Activated CD4-positive, alpha-beta memory T cell treated with anti-CD3 and anti-CD28 coated beads for 36 hours (primary cell): ENCODE measurements at regions of chr14 and their contacts with region 1.

Region 1: GRCh38 chr14:90758028-90758889 is 58.0 kb downstream of the TTC7B start:
- DNase-seq: peak; percentile 97
- H3K4me3 Mint-ChIP-seq: peak overlapping the region; percentile 73
- H3K27ac Mint-ChIP-seq: peak overlapping the region; percentile 75
- H3K4me1 Mint-ChIP-seq: peaks cover 22% of the 10 kb centered on the region
- H3K27me3 Mint-ChIP-seq: no peaks in the 10 kb centered on the region

Region 2: DNA sequence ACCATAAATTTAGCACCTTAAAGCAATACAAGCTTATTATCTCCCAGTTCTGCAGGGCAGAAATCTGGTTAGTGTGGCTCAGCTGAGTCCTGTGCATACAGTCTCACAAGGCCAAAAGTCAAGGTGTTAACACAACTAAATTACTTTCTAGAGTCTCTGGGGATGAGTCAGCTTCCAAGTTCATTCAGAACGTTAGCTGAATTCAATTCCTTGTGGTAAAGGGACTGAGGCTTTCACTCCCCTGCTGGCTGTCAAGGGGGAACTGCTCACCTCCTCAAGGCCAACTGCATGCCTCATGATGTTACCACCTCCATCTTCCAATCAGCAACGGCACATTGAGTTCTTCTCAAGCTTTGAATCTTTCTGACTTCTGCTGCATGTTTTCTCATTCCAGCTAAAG is 1993.1 kb before region 1 on chr14:
- CTCF ChIA-PET with region 1: no interaction called
- POLR2A ChIA-PET with region 1: no interaction called
- intact Hi-C with region 1: no loop called
- DNase-seq: no peak
- H3K4me3 Mint-ChIP-seq: no peak overlapping the region
- H3K27ac Mint-ChIP-seq: no peak overlapping the region
- H3K4me1 Mint-ChIP-seq: no peaks in the 10 kb centered on the region
- H3K27me3 Mint-ChIP-seq: no peaks in the 10 kb centered on the region

Region 3: GRCh38 chr14:90256354-90257131 is 501.7 kb before region 1 on chr14 and contains the start of gene PSMC1:
- CTCF ChIA-PET with region 1: no interaction called
- POLR2A ChIA-PET with region 1: no interaction called
- intact Hi-C with region 1: loop called (anchors 5 kb)
- DNase-seq: peak; percentile 95
- H3K4me3 Mint-ChIP-seq: peak within 1 kb of the TSS; percentile 98
- H3K27ac Mint-ChIP-seq: peak within 1 kb of the TSS; percentile 94
- H3K4me1 Mint-ChIP-seq: peaks cover 26% of the 10 kb centered on the region
- H3K27me3 Mint-ChIP-seq: peaks cover 5% of the 10 kb centered on the region
- total RNA-seq, gene PSMC1: 107 to 108 TPM

Region 4: DNA sequence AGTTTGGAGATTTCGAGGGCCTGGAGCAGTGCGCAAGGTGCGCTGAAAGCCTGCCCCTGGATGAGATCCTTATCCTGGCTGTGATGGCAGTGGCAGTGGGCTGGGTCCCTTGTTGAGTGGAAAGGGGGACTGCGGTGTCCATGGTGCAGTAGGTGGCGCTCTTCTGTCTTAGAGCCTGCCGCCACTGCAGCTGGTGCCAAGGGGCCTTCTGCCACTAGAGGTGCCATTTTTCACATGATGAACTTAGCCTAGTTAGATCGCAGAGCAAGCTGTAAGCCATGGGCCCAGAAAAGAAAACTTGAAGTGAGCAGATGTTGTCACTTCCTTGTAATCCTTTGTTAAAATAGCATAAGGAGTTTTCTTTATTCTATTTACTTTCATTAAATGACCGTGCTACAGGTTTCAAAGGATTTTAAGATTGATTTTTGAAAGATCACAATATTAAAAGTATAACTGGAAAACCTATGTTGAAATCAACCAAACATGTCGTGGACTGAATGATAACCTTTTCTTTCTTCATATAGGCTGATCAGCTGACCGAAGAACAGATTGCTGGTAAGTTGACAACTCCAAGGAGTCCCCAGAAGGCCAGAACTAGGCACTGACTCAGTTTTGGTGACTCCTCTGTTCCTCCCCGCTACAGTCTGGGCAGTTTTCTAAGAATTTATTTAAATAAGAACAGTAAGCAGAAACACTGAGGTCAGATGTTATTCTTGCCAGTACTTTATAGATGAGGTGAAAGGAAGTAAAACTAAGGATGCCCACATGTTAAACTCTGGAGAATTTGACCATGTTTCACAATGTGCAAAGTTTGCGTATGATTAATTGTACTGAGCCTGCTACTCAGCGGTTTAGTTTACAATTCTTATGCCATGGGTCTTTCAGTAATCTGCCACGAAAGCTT is 358.5 kb before region 1 on chr14:
- CTCF ChIA-PET with region 1: interaction called, 14 read pairs
- POLR2A ChIA-PET with region 1: no interaction called
- intact Hi-C with region 1: loop called (anchors 1 kb)
- DNase-seq: peak; percentile 92
- H3K4me3 Mint-ChIP-seq: peak overlapping the region; percentile 97
- H3K27ac Mint-ChIP-seq: peak overlapping the region; percentile 99
- H3K4me1 Mint-ChIP-seq: peaks cover 52% of the 10 kb centered on the region
- H3K27me3 Mint-ChIP-seq: no peaks in the 10 kb centered on the region

Region 5: DNA sequence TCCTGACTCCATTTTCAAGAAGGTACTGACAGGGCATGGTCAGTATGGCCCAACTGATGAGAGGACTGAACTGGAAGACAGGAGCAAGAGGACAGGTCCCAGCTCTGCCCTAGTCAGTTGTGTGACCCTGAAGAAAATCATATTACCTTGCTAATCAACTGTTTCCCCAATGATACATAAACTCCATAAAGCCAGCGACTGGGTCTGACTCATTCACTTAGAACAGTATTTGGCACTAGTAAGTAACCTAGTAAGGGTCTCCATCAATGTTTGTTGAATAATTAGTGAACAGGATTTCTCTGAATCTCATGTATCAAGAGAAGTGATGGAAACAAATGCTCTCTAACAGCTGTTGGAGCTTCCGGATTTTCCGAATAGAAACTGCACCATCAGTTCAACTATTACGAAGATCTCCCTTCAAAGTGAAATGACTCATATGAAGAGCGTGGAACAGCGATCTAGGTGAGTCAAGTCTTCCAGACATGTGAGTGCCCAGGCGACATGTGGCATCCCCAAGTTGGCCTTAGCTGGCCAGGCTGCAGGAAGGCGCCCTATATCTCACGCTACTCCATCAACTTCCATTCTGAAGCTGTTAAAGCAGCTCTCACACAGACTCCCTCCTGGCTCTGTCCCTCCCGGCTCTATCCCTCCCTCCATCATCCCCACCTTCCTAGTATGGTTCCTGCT is 36.5 kb before region 1 on chr14:
- CTCF ChIA-PET with region 1: interaction called, 13 read pairs
- POLR2A ChIA-PET with region 1: no interaction called
- intact Hi-C with region 1: loop called (anchors 5 kb)
- DNase-seq: peak; percentile 51
- H3K4me3 Mint-ChIP-seq: no peak overlapping the region
- H3K27ac Mint-ChIP-seq: no peak overlapping the region
- H3K4me1 Mint-ChIP-seq: no peaks in the 10 kb centered on the region
- H3K27me3 Mint-ChIP-seq: no peaks in the 10 kb centered on the region

Region 6: GRCh38 chr14:90774316-90774715 is 16.1 kb after region 1 on chr14:
- CTCF ChIA-PET with region 1: interaction called, 35 read pairs
- POLR2A ChIA-PET with region 1: no interaction called
- intact Hi-C with region 1: no loop called
- DNase-seq: no peak
- H3K4me3 Mint-ChIP-seq: no peak overlapping the region
- H3K27ac Mint-ChIP-seq: no peak overlapping the region
- H3K4me1 Mint-ChIP-seq: no peaks in the 10 kb centered on the region
- H3K27me3 Mint-ChIP-seq: no peaks in the 10 kb centered on the region

Region 7: DNA sequence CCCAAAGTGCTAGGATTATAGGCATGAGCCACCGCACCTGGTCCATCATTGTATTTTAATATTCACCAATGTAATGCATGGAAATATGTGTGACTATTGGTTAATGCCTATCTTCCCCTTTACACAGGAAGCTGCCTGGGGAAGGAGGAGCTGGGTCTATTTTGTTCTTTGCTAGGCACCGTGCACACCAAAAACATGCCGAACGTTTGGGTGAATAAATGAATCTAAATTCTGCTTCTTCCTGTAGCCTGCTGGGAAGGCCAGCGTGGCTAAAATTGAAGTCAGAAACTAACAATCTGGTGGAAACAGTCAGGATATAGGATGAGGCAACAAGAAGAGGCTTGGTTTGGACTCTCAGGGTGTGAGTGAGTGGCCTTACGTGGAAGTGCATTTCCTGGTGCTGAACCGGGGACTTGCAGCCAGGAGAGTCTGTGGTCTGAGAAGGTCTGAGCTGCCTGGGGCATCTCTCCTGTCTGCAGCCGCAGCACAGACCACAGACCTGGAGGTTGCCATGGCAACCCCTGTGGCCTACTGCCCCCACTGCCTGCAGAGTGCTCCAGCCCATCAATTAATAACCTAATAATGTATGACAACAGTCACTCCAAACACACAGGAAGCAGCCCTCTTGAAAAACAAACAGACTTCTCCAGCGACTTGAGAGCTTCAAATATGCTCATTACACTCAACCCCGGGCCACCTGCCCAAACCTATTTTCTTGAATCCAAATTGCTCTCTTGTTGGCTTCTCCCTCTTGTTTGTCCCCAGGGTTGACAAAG is 491.8 kb after region 1 on chr14:
- CTCF ChIA-PET with region 1: no interaction called
- POLR2A ChIA-PET with region 1: no interaction called
- intact Hi-C with region 1: loop called (anchors 5 kb)
- DNase-seq: peak; percentile 67
- H3K4me3 Mint-ChIP-seq: peak overlapping the region; percentile 36
- H3K27ac Mint-ChIP-seq: peak overlapping the region; percentile 92
- H3K4me1 Mint-ChIP-seq: peaks cover 85% of the 10 kb centered on the region
- H3K27me3 Mint-ChIP-seq: no peaks in the 10 kb centered on the region